H1 (cell line): ENCODE measurements at regions of chr5 and their contacts with region 1.

Region 1: GRCh38 chr5:7815892-7816534 is 34.9 kb downstream of the CFAP90 start:
- DNase-seq: peak; percentile 77 to 98
- H3K4me3 ChIP-seq: peak overlapping the region in 2 of 4 experiments; percentile 6 to 37; a peak in 2 of 8 replicates
- H3K27ac ChIP-seq: no peak overlapping the region
- H3K4me1 ChIP-seq: peaks cover 2 to 13% (median 6%) of the 10 kb centered on the region in 4 experiments; a peak in 6 of 7 replicates
- H3K27me3 ChIP-seq: no peaks in the 10 kb centered on the region
- CTCF ChIP-seq: peak; percentile 87 to 96 (median 91)
- EP300 ChIP-seq: peak in 1 of 2 experiments; percentile 52; a peak in 1 of 3 replicates
- POLR2A ChIP-seq: no peak
- RAD21 ChIP-seq: peak; percentile 84 to 89

Region 2: DNA sequence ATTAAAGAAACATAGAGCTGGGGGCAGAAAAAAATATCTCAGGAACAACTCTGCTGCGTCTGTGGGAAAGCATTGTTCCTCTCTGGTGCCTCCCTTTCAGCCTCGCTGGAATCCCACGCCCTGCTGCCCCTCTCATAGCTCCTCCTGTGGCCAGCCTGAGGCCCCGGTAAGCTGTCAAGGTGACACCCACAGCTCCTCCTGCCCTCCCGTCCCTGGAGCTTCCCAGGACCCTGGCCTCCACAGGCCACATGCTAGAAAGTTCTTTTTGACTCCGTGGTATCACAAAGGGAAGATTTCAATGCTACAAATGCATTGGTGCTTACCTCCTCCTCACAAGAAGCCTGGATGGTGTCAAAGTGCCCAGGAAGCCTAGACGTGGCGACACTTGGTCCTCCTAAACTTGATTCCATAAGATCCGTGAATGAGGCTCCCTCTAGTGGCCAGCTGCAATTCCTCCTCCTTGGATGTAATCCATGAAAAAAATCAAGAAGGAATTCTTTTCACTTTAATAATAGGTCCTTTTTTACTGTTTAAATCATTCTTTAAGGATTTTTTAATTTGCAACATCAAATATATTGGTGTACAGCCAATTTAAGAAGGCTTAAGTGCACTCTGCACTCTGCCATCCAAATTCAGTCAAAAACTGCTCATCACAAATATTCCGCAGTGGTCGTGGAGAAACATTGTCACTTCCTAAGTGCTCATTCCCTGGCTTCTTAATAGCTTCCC is 70.0 kb before region 1 on chr5:
- CTCF ChIA-PET with region 1: interaction called, 61 read pairs
- POLR2A ChIA-PET with region 1: no interaction called
- DNase-seq: peak; percentile 58 to 91
- H3K4me3 ChIP-seq: no peak overlapping the region
- H3K27ac ChIP-seq: no peak overlapping the region
- H3K4me1 ChIP-seq: peaks cover 0 to 2% (median under 1%) of the 10 kb centered on the region in 4 experiments; a peak in 1 of 7 replicates
- H3K27me3 ChIP-seq: no peaks in the 10 kb centered on the region
- CTCF ChIP-seq: peak; percentile 49 to 81 (median 66)
- EP300 ChIP-seq: no peak
- POLR2A ChIP-seq: no peak
- RAD21 ChIP-seq: peak; percentile 79

Region 3: DNA sequence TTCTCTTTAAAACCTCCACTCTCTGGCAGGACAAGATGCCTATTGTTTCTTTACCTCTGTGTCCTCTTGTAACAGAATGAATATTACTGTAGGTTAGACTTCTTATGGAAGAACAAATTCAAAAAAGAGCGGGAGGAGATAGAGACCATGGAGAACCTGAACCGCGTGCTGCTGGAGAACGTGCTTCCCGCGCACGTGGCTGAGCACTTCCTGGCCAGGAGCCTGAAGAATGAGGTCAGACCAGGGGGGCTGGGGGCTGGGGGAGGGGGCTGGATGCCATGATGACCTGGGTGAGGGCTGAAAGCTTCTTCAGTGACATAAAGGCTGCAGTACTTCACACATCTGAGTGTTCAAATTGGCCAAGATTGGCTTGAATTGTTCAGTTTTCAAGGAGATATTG is 26.4 kb before region 1 on chr5:
- CTCF ChIA-PET with region 1: interaction called, 10 read pairs
- POLR2A ChIA-PET with region 1: interaction called, 3 read pairs
- DNase-seq: no peak
- H3K4me3 ChIP-seq: no peak overlapping the region
- H3K27ac ChIP-seq: no peak overlapping the region
- H3K4me1 ChIP-seq: peaks cover 0 to 11% (median 7%) of the 10 kb centered on the region in 4 experiments; a peak in 6 of 7 replicates
- H3K27me3 ChIP-seq: no peaks in the 10 kb centered on the region
- CTCF ChIP-seq: no peak
- EP300 ChIP-seq: no peak
- POLR2A ChIP-seq: no peak
- RAD21 ChIP-seq: no peak

Region 4: GRCh38 chr5:7837403-7837802 is 21.4 kb after region 1 on chr5:
- CTCF ChIA-PET with region 1: interaction called, 12 read pairs
- POLR2A ChIA-PET with region 1: no interaction called
- DNase-seq: no peak
- H3K4me3 ChIP-seq: no peak overlapping the region
- H3K27ac ChIP-seq: no peak overlapping the region
- H3K4me1 ChIP-seq: no peaks in the 10 kb centered on the region
- H3K27me3 ChIP-seq: no peaks in the 10 kb centered on the region
- CTCF ChIP-seq: no peak
- EP300 ChIP-seq: no peak
- POLR2A ChIP-seq: no peak
- RAD21 ChIP-seq: no peak

Region 5: DNA sequence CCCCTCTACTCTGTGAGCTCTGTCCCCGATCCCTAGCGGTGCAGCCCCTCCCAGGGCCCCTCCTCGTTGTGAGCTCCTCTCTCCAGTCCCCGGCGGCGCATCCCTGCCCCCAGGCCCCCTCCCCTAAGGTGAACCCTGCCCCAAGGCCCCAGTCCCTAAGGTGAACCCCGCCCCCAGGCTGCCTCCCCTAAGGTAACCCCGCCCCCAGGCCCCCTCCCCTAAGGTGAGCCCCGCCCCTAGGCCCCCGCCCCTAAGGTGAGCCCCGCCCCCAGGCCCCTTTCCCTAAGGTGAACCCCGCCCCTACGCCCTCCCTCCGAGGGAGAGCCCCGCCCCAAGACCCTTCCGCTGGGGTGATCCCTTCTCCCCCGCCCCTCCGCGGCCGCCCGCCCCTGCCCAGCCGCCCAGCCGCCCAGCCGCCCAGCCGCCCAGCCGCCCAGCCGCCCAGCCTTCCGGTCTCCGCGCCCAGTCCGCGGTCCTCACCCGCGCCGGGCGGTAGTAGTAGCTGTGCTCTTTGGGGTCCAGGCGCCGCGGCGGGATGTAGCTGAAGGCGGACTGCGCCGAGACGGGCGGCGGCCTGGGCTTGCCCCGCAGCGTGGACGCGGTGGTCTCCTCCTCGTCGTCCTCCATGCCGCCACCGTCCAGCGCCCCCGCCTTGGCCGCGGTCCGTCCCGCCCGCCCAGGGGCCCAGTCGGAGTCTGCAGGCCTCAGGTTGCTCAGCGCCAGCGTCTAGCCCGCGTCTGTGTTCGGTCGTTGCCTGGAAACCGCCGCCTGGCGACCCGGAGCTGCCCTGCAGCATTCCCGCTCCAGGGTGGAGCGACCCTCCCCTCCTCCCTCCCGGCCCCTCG is 34.6 kb after region 1 on chr5 and contains the start of gene CFAP90:
- CTCF ChIA-PET with region 1: interaction called, 23 read pairs
- POLR2A ChIA-PET with region 1: interaction called, 3 read pairs
- DNase-seq: peak in 1 of 2 experiments; percentile 93
- H3K4me3 ChIP-seq: peak within 1 kb of the TSS; percentile 61 to 89 (median 67)
- H3K27ac ChIP-seq: no peak within 1 kb of the TSS; the same call in 1 of the 2 replicates
- H3K4me1 ChIP-seq: peaks cover 0 to 8% (median 3%) of the 10 kb centered on the region in 4 experiments; a peak in 4 of 7 replicates
- H3K27me3 ChIP-seq: peaks cover 0 to 16% (median 9%) of the 10 kb centered on the region in 4 experiments; a peak in 4 of 7 replicates
- CTCF ChIP-seq: peak; percentile 40 to 69 (median 69); a peak in 3 of 4 replicates
- EP300 ChIP-seq: no peak
- POLR2A ChIP-seq: peak in 1 of 2 experiments; percentile 34; a peak in 1 of 3 replicates
- RAD21 ChIP-seq: peak in 1 of 2 experiments; percentile 11; a peak in 1 of 4 replicates
- total RNA-seq, gene CFAP90: 0.39 and 0.40 TPM in 2 replicates

Region 6: DNA sequence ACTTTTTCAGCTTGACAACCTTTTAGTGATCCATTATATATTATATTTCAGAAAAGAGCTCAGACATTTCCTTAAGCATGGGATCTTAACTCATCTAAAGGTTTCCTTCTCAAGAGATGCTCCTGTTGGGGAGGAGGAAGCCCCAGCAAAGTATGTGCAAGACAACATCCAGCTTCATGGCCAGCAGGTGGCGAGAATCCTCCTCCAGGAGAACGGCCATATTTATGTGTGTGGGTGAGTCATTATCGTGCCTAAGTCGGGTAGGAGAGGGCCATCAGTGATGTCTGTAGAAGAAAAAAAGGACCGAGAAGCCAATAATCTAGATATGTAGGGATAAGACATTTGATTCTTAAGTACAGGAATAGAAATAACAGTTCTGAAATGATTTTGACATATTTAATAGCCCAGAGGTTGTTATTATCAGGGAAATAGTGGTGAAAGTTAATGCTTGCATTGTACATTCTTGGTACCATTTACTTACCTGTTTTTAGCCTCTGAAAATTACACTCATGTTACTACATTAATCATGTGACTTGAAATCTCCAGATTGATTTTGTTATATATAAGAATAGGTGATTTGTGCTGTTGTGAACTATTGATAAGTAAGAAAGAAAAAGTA is 81.1 kb after region 1 on chr5:
- CTCF ChIA-PET with region 1: no interaction called
- POLR2A ChIA-PET with region 1: no interaction called
- DNase-seq: peak in 1 of 2 experiments; percentile 9
- H3K4me3 ChIP-seq: no peak overlapping the region
- H3K27ac ChIP-seq: no peak overlapping the region
- H3K4me1 ChIP-seq: no peaks in the 10 kb centered on the region
- H3K27me3 ChIP-seq: no peaks in the 10 kb centered on the region
- CTCF ChIP-seq: peak; percentile 22 to 61 (median 57); a peak in 3 of 4 replicates
- EP300 ChIP-seq: no peak
- POLR2A ChIP-seq: no peak
- RAD21 ChIP-seq: peak; percentile 32 to 41; a peak in 3 of 4 replicates